Activated CD8-positive, alpha-beta T cell treated with anti-CD3 and anti-CD28 coated beads for 36 hours (primary cell): ENCODE measurements at regions of chr19 and their contacts with region 1.

Region 1: GRCh38 chr19:7943444-7944176 is at the start of gene TIMM44:
- DNase-seq: peak; percentile 99
- ATAC-seq: peak; percentile 99
- H3K4me3 Mint-ChIP-seq: peak within 1 kb of the TSS; percentile 97
- H3K27ac Mint-ChIP-seq: peak within 1 kb of the TSS; percentile 98
- H3K4me1 Mint-ChIP-seq: peaks cover 47% of the 10 kb centered on the region
- H3K27me3 Mint-ChIP-seq: no peaks in the 10 kb centered on the region
- CTCF ChIP-seq: no peak
- total RNA-seq, gene TIMM44: 92.3 to 95.5 TPM

Region 2: DNA sequence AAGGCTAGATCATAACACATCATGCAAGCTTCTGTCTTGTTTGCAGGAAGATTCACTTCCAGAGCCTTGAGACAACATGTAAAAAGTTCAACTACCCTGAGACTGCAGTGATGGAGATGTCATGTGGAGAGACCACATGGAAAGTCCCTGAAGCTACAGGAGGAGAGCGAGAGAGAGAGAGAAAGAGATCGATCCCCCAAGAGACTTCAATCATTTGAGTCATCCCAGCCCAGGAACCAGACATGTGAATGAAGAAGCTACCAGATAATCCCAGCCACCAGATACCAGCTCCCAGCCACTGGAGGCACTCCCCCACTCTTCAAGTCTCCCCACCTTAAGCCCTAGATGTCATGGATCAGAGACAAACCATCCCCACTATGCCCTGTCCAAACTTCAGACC is 124.3 kb before region 1 on chr19:
- CTCF ChIA-PET with region 1: no interaction called
- POLR2A ChIA-PET with region 1: no interaction called
- intact Hi-C with region 1: no loop called
- DNase-seq: no peak
- ATAC-seq: peak; percentile 42
- H3K4me3 Mint-ChIP-seq: no peak overlapping the region
- H3K27ac Mint-ChIP-seq: no peak overlapping the region
- H3K4me1 Mint-ChIP-seq: peaks cover 8% of the 10 kb centered on the region
- H3K27me3 Mint-ChIP-seq: peaks cover 34% of the 10 kb centered on the region
- CTCF ChIP-seq: no peak

Region 3: GRCh38 chr19:7868676-7869452 is 74.7 kb before region 1 on chr19:
- CTCF ChIA-PET with region 1: interaction called, 11 read pairs
- POLR2A ChIA-PET with region 1: interaction called, 6 read pairs
- intact Hi-C with region 1: no loop called
- DNase-seq: peak; percentile 86
- ATAC-seq: peak; percentile 67
- H3K4me3 Mint-ChIP-seq: peak overlapping the region; percentile 75
- H3K27ac Mint-ChIP-seq: peak overlapping the region; percentile 73
- H3K4me1 Mint-ChIP-seq: peaks cover 34% of the 10 kb centered on the region
- H3K27me3 Mint-ChIP-seq: peaks cover 42% of the 10 kb centered on the region
- CTCF ChIP-seq: peak; percentile 96

Region 4: GRCh38 chr19:7919610-7920518 is 23.7 kb before region 1 on chr19 and contains the start of gene SNAPC2:
- CTCF ChIA-PET with region 1: interaction called, 31 read pairs
- POLR2A ChIA-PET with region 1: interaction called, 38 read pairs
- intact Hi-C with region 1: no loop called
- DNase-seq: peak; percentile 98
- ATAC-seq: peak; percentile 72
- H3K4me3 Mint-ChIP-seq: peak within 1 kb of the TSS; percentile 81
- H3K27ac Mint-ChIP-seq: peak within 1 kb of the TSS; percentile 89
- H3K4me1 Mint-ChIP-seq: peaks cover 28% of the 10 kb centered on the region
- H3K27me3 Mint-ChIP-seq: peaks cover 22% of the 10 kb centered on the region
- CTCF ChIP-seq: no peak
- total RNA-seq, gene SNAPC2: 16.0 to 18.2 TPM

Region 5: DNA sequence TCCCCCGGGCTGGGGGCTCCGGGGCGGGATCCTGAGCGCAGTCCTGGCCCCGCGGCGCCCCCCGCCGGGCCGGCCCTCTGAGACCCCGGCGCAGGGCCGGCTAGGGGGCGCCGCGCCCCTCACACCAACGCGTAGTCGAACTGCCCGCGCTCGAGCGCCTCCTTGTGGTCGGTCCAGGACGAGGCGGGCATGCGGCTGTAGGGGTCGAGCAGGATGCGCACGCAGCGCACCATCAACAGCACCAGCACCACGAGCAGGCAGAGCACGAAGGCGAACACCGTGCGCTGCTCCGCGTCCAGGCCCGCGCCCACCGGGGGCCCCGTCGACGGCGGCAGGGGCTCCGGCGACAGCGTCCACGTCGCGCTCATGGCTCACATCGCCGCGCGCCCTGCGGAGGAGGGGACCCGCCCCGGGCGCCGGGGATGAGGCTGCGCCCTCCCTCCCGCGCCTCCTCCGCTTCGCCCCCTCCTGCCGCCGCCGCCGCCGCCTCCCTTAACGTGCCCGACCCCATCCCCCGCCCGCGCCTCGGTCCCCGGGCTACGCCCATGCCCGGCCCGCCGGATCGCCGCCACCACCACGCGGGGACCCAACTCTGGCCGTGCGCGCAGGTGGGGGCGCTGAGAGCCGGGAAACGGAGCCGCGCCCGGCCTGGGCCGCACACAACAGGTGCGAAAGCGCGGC is 18.3 kb before region 1 on chr19:
- CTCF ChIA-PET with region 1: interaction called, 31 read pairs
- POLR2A ChIA-PET with region 1: interaction called, 81 read pairs
- intact Hi-C with region 1: no loop called
- DNase-seq: peak; percentile 91
- ATAC-seq: peak; percentile 47
- H3K4me3 Mint-ChIP-seq: peak overlapping the region; percentile 56
- H3K27ac Mint-ChIP-seq: no peak overlapping the region
- H3K4me1 Mint-ChIP-seq: peaks cover 19% of the 10 kb centered on the region
- H3K27me3 Mint-ChIP-seq: no peaks in the 10 kb centered on the region
- CTCF ChIP-seq: peak; percentile 95

Region 6: DNA sequence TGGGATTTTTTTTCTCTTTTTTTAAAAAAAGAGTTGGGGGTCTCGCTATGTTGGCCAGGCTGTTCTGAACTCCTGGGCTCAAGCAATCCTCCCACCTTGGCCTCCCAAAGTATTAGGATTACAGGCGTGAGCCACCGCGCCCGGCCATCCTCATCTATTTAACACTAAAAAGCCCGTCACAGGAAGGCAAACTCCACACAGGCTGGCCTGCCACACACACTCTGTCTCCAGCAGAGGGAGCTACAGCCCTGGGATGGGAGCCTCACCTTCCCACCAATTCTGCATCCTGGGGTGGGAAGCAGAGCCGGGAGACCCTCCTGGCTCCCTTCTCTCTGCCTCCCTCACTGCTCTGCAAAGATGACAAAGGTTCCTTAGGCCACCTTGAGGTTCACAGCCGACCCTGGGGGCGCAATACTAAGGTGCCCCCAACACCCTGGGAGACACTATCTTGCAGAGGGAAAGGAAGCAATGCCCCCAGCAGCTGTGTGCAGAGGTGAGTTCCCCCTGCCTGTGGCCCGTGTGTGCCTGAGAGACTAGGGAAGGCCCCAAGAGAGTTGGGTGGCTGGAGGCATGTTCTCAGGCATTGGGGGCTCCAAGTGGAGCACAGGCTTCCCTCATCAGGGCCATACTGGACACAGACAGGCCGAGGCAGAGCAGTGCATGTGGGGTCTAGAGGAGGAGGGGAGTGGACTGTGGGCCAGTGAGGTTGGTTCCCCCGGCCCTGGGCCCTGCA is 27.3 kb after region 1 on chr19:
- CTCF ChIA-PET with region 1: interaction called, 28 read pairs
- POLR2A ChIA-PET with region 1: interaction called, 7 read pairs
- intact Hi-C with region 1: no loop called
- DNase-seq: peak; percentile 49
- ATAC-seq: peak; percentile 67
- H3K4me3 Mint-ChIP-seq: no peak overlapping the region
- H3K27ac Mint-ChIP-seq: no peak overlapping the region
- H3K4me1 Mint-ChIP-seq: no peaks in the 10 kb centered on the region
- H3K27me3 Mint-ChIP-seq: no peaks in the 10 kb centered on the region
- CTCF ChIP-seq: peak; percentile 81

Region 7: DNA sequence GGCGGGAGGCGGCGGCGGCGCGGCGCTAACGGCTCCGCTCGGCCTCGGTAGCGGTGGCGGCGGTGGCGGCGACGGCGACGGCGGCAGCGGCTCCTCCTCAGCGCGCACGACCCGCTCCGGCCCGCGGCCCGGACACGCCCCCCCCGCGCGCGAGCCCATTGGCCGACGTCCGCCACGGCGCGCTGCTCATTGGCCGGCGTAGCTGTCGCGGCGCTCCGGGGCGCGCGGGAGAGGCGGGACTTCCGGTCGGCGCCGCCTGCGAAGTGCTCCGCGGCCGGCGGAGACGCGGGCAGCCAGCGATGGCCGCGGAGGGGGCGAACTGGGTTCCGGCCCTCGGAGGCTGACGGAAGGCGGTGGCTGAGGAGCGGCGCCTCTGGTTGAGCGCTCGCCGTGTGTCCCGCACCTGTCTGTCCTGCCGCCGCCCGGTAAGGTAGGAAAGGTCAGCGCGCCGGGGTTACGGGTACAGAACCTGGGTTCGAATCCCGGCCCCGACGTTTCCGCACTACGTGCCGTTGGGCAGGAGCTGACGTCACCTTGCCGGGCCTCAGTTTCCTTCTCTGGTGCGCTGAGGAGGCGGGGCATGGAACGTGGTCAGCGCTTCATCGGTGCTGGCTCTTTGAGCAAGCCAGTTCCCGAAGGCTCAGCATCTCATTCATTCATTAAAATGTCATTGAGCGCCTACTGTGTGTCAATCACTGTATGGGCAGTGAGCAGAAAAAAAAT is 62.1 kb after region 1 on chr19 and contains the start of gene ELAVL1:
- CTCF ChIA-PET with region 1: interaction called, 31 read pairs
- POLR2A ChIA-PET with region 1: interaction called, 11 read pairs
- intact Hi-C with region 1: loop called (anchors 10 kb)
- DNase-seq: peak; percentile 90
- ATAC-seq: peak; percentile 91
- H3K4me3 Mint-ChIP-seq: peak within 1 kb of the TSS; percentile 90
- H3K27ac Mint-ChIP-seq: peak within 1 kb of the TSS; percentile 89
- H3K4me1 Mint-ChIP-seq: peaks cover 31% of the 10 kb centered on the region
- H3K27me3 Mint-ChIP-seq: no peaks in the 10 kb centered on the region
- CTCF ChIP-seq: no peak
- total RNA-seq, gene ELAVL1: 161 to 164 TPM

Region 8: GRCh38 chr19:8240274-8241229 is 296.9 kb after region 1 on chr19:
- CTCF ChIA-PET with region 1: interaction called, 4 read pairs
- POLR2A ChIA-PET with region 1: no interaction called
- intact Hi-C with region 1: loop called (anchors 10 kb)
- DNase-seq: peak; percentile 86
- ATAC-seq: peak; percentile 88
- H3K4me3 Mint-ChIP-seq: peak overlapping the region; percentile 2
- H3K27ac Mint-ChIP-seq: peak overlapping the region; percentile 31
- H3K4me1 Mint-ChIP-seq: peaks cover 19% of the 10 kb centered on the region
- H3K27me3 Mint-ChIP-seq: no peaks in the 10 kb centered on the region
- CTCF ChIP-seq: no peak